Head of caudate nucleus (tissue), 42 donors: ENCODE measurements at regions of chr1 and their contacts with region 1.

Region 1: DNA sequence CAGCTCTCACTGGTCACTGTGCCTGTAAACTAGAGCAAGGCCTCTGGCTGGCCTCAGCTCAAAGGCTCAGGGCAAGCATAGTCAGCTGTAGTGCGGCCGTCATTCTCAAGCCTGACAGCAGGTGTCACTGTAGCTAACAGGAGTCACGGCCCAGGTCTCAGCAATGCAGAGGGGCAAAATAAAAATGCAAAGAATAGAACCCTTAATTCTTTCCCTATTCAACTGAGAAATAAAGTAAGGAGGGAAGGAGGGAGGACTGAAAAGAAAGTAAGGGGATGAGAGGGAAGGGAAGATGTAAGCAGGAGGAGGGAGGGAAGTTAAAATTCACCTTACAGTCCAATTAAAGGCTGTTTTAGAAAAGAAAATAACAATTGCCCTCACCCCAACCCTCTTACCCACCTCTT is 106.1 kb downstream of the KIAA0319L start:
- DNase-seq: peak; percentile 68 to 95 (median 90)

Region 2: DNA sequence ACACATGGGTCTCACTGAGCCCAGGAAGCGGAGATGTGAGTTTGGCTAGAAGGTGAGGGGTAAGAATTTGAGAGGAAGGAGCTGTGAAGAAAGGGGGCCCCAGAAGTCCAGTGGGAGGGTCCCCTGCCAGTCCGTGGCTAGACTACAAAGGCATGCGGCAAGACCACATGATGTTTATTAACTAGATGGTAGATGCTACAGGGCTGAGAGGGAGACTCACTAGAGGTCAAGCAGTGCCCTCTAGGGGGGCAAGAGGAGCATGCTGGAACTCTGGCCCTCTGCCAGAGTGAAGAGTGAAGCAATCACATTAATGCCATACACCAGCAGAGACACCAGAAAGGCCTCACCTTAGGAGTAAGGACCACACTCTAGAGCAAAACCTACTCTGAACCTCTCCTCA is 93.9 kb after region 1 on chr1:
- intact Hi-C with region 1: loop called (anchors 5 kb)
- DNase-seq: peak in 28 of 42 donors; percentile 34 to 85 (median 66)